Activated T-helper 1 cell treated with anti-CD3 and anti-CD28 coated beads, Interleukin-12 subunit alpha, Interleukin-12 subunit beta, Interleukin-2, Interleukin-4 antibody, amounts not matched to agents 30 ng/mL and 10 ng/mL and 1 ng/mL, durations not matched to agents 14 hours and 24 hours and 36 hours (primary cell): ENCODE measurements at regions of chr10 and their contacts with region 1.

Region 1: GRCh38 chr10:17257466-17258321 is 29.7 kb downstream of the VIM start:
- DNase-seq: peak; percentile 52
- H3K4me3 Mint-ChIP-seq: no peak overlapping the region
- H3K27ac Mint-ChIP-seq: no peak overlapping the region
- H3K4me1 Mint-ChIP-seq: peaks cover 17% of the 10 kb centered on the region
- H3K27me3 Mint-ChIP-seq: peaks cover 10% of the 10 kb centered on the region

Region 2: GRCh38 chr10:16828114-16828568 is 429.6 kb before region 1 on chr10:
- intact Hi-C with region 1: loop called (anchors 1 kb)
- DNase-seq: peak; percentile 48
- H3K4me3 Mint-ChIP-seq: no peak overlapping the region
- H3K27ac Mint-ChIP-seq: no peak overlapping the region
- H3K4me1 Mint-ChIP-seq: peaks cover 7% of the 10 kb centered on the region
- H3K27me3 Mint-ChIP-seq: peaks cover 6% of the 10 kb centered on the region

Region 3: GRCh38 chr10:16843252-16843870 is 414.3 kb before region 1 on chr10:
- intact Hi-C with region 1: loop called (anchors 1 kb)
- DNase-seq: no peak
- H3K4me3 Mint-ChIP-seq: no peak overlapping the region
- H3K27ac Mint-ChIP-seq: no peak overlapping the region
- H3K4me1 Mint-ChIP-seq: no peaks in the 10 kb centered on the region
- H3K27me3 Mint-ChIP-seq: peaks cover 2% of the 10 kb centered on the region

Region 4: DNA sequence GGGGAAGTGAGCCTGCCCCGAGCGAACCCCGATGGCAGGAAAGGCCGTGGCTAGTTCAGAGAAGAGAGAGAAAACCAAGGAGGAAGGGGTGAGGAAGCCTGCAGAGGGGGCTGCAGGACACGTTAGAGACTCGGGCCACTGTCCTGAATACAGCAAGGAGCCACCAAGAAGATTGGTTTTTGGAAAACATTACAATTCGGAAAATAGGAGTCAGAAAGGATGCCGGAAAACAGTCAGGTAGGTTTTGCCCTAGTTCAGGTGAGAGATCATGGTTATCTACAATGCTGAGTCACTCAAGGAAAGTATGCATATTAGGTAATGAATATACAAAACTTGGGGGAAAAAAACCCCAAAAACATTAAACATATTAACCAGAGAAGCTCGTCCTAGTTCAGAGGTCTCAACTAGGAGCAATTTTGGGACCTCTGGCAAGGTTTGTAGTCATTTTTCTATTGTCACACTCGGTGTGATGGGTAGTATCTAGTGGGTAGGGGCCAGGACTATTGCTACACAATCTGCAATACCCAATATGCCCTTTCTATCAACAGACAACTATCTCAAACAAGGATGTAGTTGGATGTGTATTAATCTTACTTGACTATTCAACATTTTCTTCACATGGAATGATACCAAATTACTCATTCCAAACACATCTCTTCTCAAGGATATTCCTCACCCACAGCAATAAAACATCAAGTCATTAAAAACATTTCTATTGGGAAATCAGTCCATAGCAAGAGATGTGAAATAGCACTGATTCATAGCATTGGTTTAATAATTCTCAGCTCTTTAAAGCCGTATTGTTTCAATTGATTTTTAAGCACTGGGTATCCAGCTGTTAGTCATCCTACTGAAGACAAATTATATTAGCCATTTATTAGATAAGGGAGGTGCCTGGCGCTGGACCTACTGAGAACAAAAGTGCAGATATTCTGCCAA is 366.1 kb before region 1 on chr10:
- intact Hi-C with region 1: loop called (anchors 5 kb)
- DNase-seq: no peak
- H3K4me3 Mint-ChIP-seq: no peak overlapping the region
- H3K27ac Mint-ChIP-seq: no peak overlapping the region
- H3K4me1 Mint-ChIP-seq: peaks cover 10% of the 10 kb centered on the region
- H3K27me3 Mint-ChIP-seq: peaks cover 9% of the 10 kb centered on the region

Region 5: DNA sequence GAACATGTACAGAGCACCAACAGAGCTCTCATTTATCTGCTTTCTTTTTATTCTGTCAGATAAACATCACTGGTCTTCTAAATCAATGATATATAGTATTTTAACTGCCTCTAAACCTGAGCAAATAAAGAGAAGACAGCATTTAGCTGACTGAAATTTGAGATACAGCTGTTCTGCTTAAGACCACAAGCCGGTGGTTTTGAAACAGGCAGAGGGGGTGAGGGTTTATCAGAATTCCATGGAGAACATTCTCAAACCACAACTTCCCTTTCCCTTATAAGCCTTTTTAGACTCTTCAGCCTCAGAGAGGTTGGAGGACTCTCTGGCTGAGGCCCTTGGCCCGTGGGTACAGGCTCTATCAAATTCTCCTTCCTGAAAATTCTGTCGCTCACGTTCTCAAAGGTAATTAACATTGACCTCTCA is 353.0 kb before region 1 on chr10:
- intact Hi-C with region 1: loop called (anchors 5 kb)
- DNase-seq: no peak
- H3K4me3 Mint-ChIP-seq: no peak overlapping the region
- H3K27ac Mint-ChIP-seq: no peak overlapping the region
- H3K4me1 Mint-ChIP-seq: peaks cover 9% of the 10 kb centered on the region
- H3K27me3 Mint-ChIP-seq: peaks cover 7% of the 10 kb centered on the region

Region 6: DNA sequence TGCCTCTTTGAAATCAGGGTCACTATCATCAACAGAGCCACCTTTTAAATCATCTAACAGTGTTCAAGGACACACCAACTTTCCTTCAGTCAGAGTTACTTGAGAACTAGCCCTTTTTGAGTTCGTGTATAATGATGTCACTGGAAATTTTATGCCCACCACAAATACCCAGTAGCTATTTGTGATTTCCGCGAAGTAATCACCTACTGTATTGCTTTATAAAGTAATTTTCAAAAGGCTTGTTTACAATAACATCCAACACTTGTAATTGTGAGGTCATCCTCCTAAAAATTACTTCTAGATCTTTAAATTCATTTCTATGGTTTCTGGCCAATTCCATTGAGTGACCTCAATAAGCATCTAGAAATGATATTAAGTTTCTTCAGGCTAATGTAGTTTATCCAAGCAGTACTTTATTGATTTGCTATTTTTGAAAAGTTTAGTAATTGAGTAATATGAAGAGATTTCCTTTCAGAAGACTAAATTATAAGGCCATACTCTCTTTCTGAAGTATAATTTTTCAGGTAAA is 69.0 kb before region 1 on chr10:
- intact Hi-C with region 1: no loop called
- DNase-seq: no peak
- H3K4me3 Mint-ChIP-seq: no peak overlapping the region
- H3K27ac Mint-ChIP-seq: no peak overlapping the region
- H3K4me1 Mint-ChIP-seq: no peaks in the 10 kb centered on the region
- H3K27me3 Mint-ChIP-seq: no peaks in the 10 kb centered on the region

Region 7: DNA sequence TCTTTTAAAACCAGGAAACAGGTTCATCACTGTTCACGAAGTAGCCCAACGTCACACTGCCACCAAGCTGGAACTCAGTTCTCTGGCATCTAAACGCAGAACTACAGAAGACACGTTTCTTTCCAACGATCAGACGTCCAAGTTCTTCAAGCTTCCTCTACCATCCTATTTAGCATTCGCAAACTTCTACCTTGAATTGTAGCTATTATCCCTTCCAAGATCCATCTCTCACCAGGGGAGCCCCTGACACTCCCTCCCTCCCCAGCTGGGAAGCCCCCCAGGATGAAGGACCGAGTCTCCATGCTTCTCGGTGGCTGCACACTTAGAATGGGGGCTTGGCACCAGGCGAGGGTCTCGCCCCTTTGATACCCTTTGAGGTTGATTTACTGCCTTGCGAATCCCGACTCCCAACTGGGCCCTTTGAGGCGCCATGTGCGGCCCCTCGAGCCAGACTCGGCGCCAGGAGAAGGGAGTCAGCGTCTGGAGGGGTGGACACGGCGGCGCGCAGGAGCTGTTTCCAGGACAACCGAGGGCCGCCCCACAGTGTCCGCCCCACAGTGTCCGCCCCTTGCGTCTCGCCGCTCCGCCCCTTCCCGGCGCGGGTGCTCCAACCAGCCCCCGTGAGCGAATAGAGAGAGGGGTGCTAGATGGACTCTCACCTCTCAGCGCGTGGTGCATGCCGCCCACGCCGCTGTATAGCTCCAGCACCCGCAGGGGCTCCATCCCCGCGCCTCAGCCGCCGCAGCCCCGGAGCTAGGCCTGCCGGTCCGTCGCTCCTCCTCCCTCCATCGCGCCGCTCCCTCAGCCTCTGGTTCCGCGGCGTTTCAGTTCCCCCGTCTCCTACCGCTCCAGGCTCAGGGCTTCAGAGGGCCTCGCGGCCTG is 56.5 kb before region 1 on chr10 and contains the start of gene TRDMT1:
- intact Hi-C with region 1: loop called (anchors 2 kb)
- DNase-seq: peak; percentile 78
- H3K4me3 Mint-ChIP-seq: peak within 1 kb of the TSS; percentile 84
- H3K27ac Mint-ChIP-seq: peak within 1 kb of the TSS; percentile 77
- H3K4me1 Mint-ChIP-seq: peaks cover 27% of the 10 kb centered on the region
- H3K27me3 Mint-ChIP-seq: peaks cover 2% of the 10 kb centered on the region
- total RNA-seq, gene TRDMT1: 3.3 and 4.2 TPM in 2 replicates